ENCODE measurements at regions of chr17 and their contacts with region 1.

Region 1: DNA sequence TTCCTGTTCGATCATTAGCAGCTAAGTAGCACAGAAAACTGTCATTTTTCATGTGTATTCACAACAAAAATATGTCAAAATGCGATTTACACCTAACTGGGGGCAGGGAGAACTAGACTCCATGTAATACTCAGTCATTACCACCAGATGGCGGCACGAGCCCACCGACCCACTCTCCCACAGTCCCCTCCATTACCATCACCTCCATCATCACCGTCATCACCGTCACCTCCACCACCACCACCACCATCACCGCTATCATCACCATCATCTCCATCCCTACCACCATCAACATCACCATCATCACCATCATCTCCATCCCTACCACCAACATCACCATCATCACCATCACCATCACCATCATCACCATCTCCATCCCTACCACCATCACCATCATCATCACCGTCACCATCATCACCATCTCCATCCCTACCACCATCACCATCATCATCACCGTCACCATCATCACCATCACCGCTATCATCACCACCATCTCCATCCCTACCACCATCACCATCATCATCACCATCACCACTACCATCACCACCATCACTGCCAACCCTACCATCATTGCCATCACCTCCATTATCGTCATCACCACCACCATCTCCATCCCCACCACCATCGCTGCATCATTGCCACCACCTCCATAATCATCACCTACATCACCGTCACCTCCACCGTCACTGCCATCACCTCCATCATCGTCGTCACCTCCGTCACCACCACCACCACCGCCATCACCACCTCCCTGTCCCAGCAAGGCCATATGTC is 14.4 kb downstream of the NDUFAF8 start:
- DNase-seq: peak; percentile 43
- H3K4me3 ChIP-seq: no peak overlapping the region
- H3K27ac ChIP-seq: no peak overlapping the region
- H3K4me1 ChIP-seq: no peaks in the 10 kb centered on the region
- H3K27me3 ChIP-seq: no peaks in the 10 kb centered on the region
- CTCF ChIP-seq: peak; percentile 66 to 76
- POLR2A ChIP-seq: no peak

Region 2: GRCh38 chr17:81285179-81285878 is 31.8 kb after region 1 on chr17:
- CTCF ChIA-PET with region 1: interaction called, 6 read pairs
- POLR2A ChIA-PET with region 1: no interaction called
- dilution Hi-C with region 1: no loop called
- intact Hi-C with region 1: loop called (anchors 1 kb)
- DNase-seq: peak; percentile 64
- H3K4me3 ChIP-seq: peak overlapping the region; percentile 16 to 46 (median 30)
- H3K27ac ChIP-seq: peak overlapping the region; percentile 80
- H3K4me1 ChIP-seq: peaks cover 27% of the 10 kb centered on the region
- H3K27me3 ChIP-seq: no peaks in the 10 kb centered on the region
- CTCF ChIP-seq: peak in 1 of 2 donors; percentile 7
- POLR2A ChIP-seq: peak; percentile 73

Region 3: DNA sequence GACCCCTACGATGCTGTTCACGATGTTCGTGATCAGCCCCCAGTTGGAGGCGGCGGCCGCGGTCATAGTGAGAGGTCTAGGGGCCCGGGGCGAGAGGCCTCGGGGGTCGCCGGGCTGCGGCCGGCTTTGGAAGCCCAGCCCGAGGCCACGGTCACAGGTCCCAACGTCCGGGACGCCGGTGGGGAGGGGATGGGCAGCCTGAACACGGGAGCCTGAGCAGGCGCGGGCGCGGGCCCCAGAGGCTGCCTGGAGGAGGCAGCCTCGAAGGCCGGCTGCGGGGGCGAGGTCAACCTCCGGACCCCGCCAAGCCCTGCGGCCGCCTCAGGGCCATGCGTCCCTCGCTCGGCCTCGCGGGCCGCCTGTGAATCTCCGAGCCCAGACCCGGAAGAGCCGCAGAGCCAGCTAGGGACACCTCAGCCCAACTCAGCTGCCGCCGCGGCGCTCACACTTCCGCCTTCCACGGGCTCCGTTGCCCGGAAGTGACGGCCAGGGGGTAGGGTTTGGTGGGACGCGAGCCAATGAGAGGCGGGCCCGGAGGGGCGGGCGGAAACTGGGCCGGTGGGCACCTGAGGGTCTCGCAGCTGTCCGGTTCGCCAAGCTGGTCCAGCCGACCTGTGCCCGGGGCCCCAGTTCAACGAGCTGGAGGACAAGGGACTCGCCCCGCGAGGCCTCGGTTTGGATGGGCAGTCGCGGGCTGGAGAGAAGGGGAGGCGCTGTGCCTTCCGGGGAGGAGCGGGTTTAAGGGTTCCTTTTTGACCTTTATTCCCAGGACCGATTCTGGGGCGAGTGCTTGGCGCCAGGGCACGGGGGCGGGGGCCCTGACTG is 41.5 kb after region 1 on chr17 and contains the start of gene SLC38A10:
- CTCF ChIA-PET with region 1: interaction called, 10 read pairs
- POLR2A ChIA-PET with region 1: no interaction called
- dilution Hi-C with region 1: no loop called
- intact Hi-C with region 1: no loop called
- DNase-seq: peak; percentile 79
- H3K4me3 ChIP-seq: peak within 1 kb of the TSS; percentile 57 to 72 (median 63)
- H3K27ac ChIP-seq: peak within 1 kb of the TSS; percentile 86
- H3K4me1 ChIP-seq: peaks cover 14% of the 10 kb centered on the region
- H3K27me3 ChIP-seq: no peaks in the 10 kb centered on the region
- CTCF ChIP-seq: no peak
- POLR2A ChIP-seq: peak; percentile 91
- total RNA-seq, gene SLC38A10: 109 and 113 TPM in 2 replicates

Region 4: GRCh38 chr17:81394921-81395599 is 141.5 kb after region 1 on chr17 and contains the start of gene BAHCC1:
- CTCF ChIA-PET with region 1: interaction called, 12 read pairs
- POLR2A ChIA-PET with region 1: no interaction called
- dilution Hi-C with region 1: no loop called
- intact Hi-C with region 1: loop called (anchors 2 kb)
- DNase-seq: peak; percentile 100
- H3K4me3 ChIP-seq: peak within 1 kb of the TSS; percentile 60 to 77 (median 76)
- H3K27ac ChIP-seq: peak within 1 kb of the TSS; percentile 85
- H3K4me1 ChIP-seq: peaks cover 33% of the 10 kb centered on the region
- H3K27me3 ChIP-seq: no peaks in the 10 kb centered on the region
- CTCF ChIP-seq: no peak
- POLR2A ChIP-seq: peak; percentile 97
- total RNA-seq, gene BAHCC1: 10.3 and 11.6 TPM in 2 replicates

Region 5: GRCh38 chr17:81428948-81429774 is 175.6 kb after region 1 on chr17:
- CTCF ChIA-PET with region 1: interaction called, 15 read pairs
- POLR2A ChIA-PET with region 1: no interaction called
- dilution Hi-C with region 1: no loop called
- intact Hi-C with region 1: no loop called
- DNase-seq: peak; percentile 74
- H3K4me3 ChIP-seq: no peak overlapping the region
- H3K27ac ChIP-seq: no peak overlapping the region
- H3K4me1 ChIP-seq: peaks cover 5% of the 10 kb centered on the region
- H3K27me3 ChIP-seq: no peaks in the 10 kb centered on the region
- CTCF ChIP-seq: no peak
- POLR2A ChIP-seq: no peak

Region 6: GRCh38 chr17:81512560-81513371 is 259.2 kb after region 1 on chr17 and contains the start of gene ACTG1:
- CTCF ChIA-PET with region 1: interaction called, 6 read pairs
- POLR2A ChIA-PET with region 1: no interaction called
- dilution Hi-C with region 1: no loop called
- intact Hi-C with region 1: loop called (anchors 5 kb)
- DNase-seq: peak; percentile 88
- H3K4me3 ChIP-seq: peak within 1 kb of the TSS; percentile 42 to 93 (median 78)
- H3K27ac ChIP-seq: peak within 1 kb of the TSS; percentile 60
- H3K4me1 ChIP-seq: peaks cover 36% of the 10 kb centered on the region
- H3K27me3 ChIP-seq: no peaks in the 10 kb centered on the region
- CTCF ChIP-seq: no peak
- POLR2A ChIP-seq: peak; percentile 99
- total RNA-seq, gene ACTG1: 6,127 and 6,180 TPM in 2 replicates

Measured in endothelial cell of umbilical vein (primary cell).